Activated CD8-positive, alpha-beta T cell treated with anti-CD3 and anti-CD28 coated beads for 36 hours (primary cell): ENCODE measurements at regions of chrX and their contacts with region 1.

Region 1: GRCh38 chrX:48028091-48028490 is 21.3 kb downstream of the SPACA5 start:
- DNase-seq: no peak
- ATAC-seq: no peak
- H3K4me3 Mint-ChIP-seq: no peak overlapping the region
- H3K27ac Mint-ChIP-seq: no peak overlapping the region
- H3K4me1 Mint-ChIP-seq: peaks cover 8% of the 10 kb centered on the region
- H3K27me3 Mint-ChIP-seq: no peaks in the 10 kb centered on the region
- CTCF ChIP-seq: no peak

Region 2: GRCh38 chrX:47854474-47854873 is 173.6 kb before region 1 on chrX:
- CTCF ChIA-PET with region 1: interaction called, 12 read pairs
- POLR2A ChIA-PET with region 1: no interaction called
- intact Hi-C with region 1: loop called (anchors 1 kb)
- DNase-seq: peak; percentile 47
- ATAC-seq: no peak
- H3K4me3 Mint-ChIP-seq: no peak overlapping the region
- H3K27ac Mint-ChIP-seq: no peak overlapping the region
- H3K4me1 Mint-ChIP-seq: peaks cover 4% of the 10 kb centered on the region
- H3K27me3 Mint-ChIP-seq: no peaks in the 10 kb centered on the region
- CTCF ChIP-seq: peak; percentile 31